Ascending aorta (tissue), 2 donors: ENCODE measurements at regions of chr7 and their contacts with region 1.

Region 1: GRCh38 chr7:109206196-109206595 is 636.5 kb downstream of the DNAJB9 start:
- DNase-seq: no peak
- H3K4me3 ChIP-seq: no peak overlapping the region
- H3K27ac ChIP-seq: no peak overlapping the region
- H3K4me1 ChIP-seq: no peaks in the 10 kb centered on the region
- H3K27me3 ChIP-seq: no peaks in the 10 kb centered on the region
- CTCF ChIP-seq: no peak

Region 2: DNA sequence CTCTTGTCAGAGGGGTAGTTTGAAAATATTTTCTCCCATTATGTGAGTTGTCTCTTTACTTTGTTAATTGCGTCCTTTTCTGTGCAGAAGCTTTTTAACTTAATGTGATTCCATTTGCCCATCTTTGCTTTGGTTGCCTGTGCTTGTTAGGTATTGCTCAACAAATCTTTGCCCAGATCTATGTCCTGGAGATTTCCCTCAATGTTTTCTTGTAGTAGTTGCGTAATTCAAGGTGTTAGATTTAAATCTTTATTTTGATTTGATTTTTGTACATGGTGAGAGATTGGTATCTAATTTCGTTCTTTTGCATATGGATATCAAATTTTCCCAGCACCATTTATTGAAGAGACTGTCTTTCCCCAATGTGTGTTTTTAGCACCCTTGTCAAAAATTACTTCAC is 69.3 kb before region 1 on chr7:
- intact Hi-C with region 1: no loop called
- DNase-seq: no peak
- H3K4me3 ChIP-seq: no peak overlapping the region
- H3K27ac ChIP-seq: no peak overlapping the region
- H3K4me1 ChIP-seq: no peaks in the 10 kb centered on the region
- H3K27me3 ChIP-seq: no peaks in the 10 kb centered on the region
- CTCF ChIP-seq: no peak

Region 3: DNA sequence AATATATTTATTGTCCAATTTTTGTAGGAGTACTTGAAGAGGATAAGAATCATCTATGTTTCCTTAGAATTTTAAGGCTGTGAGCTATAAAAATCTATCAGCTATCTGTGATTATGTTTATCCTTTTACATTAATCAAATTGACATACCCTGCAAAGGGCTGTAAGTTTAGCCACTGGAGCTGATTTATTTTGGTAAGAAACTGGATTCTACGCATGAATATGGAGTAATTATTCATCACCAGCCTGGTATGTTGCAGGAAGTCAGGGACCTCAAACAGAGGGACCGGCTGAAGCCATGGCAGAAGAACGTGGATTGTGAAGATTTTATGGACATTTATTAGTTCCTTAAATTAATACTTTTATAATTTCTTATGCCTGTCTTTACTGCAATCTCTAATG is 60.4 kb after region 1 on chr7:
- intact Hi-C with region 1: no loop called
- DNase-seq: no peak
- H3K4me3 ChIP-seq: no peak overlapping the region
- H3K27ac ChIP-seq: no peak overlapping the region
- H3K4me1 ChIP-seq: no peaks in the 10 kb centered on the region
- H3K27me3 ChIP-seq: no peaks in the 10 kb centered on the region
- CTCF ChIP-seq: no peak

Region 4: DNA sequence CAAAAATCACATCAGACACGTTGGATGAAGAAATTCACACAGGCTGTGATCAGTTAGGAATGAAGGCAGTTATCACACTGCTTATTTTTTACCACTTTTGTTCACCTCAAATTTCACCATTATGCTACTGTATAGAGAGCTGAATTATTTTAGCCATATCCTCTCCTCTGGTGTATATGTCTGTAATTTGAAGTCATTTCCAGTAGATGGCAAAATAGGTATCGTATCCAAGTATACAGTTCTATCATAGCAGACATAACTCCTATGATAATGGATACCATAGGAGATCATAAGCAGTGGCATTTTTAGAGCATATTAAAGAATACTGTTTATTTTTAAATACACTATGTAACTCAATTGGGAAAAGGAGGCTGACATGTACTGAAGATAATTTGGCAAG is 273.2 kb after region 1 on chr7:
- intact Hi-C with region 1: loop called (anchors 10 kb)
- DNase-seq: no peak
- H3K4me3 ChIP-seq: no peak overlapping the region
- H3K27ac ChIP-seq: no peak overlapping the region
- H3K4me1 ChIP-seq: no peaks in the 10 kb centered on the region
- H3K27me3 ChIP-seq: no peaks in the 10 kb centered on the region
- CTCF ChIP-seq: no peak